ENCODE measurements at regions of chr4 and their contacts with region 1.

Region 1: DNA sequence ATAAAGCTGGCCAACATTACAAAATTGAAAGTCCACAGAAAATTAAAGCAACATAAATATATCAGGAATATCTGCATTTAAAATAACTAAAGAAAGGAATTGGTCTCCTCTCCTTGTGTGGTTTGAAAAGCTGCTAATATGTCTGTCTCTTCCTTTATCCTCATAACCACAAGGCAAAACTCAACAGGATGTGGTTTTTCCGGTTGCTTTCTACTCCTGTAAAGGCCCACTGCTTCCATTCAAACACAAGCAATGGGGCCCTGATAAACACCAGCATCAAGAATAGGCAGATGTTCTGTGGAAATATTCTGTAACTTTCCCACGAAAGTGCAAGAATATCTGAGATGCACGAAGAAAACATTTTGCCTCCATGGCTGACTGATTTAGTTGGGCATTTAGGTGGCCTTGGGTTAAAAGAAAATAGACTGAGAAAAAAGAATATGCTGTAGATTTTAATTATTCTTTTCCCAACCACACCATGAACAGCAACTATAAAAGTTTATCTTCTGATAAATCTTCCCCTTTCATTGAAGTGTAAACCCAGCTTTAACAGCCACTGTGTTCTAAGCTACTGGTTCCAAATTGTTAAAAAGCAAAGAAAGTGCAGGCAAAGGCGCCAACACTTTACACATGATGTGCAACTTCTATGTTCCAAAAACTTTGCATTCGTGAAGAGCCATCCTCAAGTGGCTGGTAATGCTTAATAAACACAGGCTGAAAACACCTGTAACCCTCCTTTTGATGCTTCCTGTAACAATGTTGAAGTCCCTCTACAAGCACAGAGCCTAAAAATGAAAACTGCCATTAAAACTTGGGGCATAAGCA is 50.5 kb upstream of the NDST3 start:
- DNase-seq: no peak
- ATAC-seq: no peak
- H3K4me3 ChIP-seq: no peak overlapping the region
- H3K27ac ChIP-seq: no peak overlapping the region
- H3K4me1 ChIP-seq: no peaks in the 10 kb centered on the region
- H3K27me3 ChIP-seq: no peaks in the 10 kb centered on the region
- CTCF ChIP-seq: no peak
- EP300 ChIP-seq: no peak
- POLR2A ChIP-seq: no peak
- RAD21 ChIP-seq: no peak

Region 2: DNA sequence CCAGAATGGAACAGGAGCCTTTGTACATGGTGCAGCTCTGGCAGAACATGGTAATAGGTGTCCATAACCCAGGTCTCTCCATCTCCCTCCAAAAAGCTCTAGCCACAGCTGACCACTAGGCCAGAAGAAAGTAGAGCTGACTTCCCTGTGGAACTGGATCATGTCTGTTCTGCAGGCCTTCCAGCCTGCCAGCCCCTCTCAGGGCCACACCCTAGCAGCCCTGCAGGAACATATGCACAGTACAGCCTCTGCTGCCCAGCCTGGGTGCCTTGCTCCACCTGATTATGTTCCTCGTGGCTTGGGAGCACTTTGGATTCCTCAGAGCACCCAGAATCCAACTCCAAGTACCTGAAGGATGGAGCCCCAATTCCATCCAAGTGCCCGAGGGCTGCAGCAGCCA is 62.6 kb after region 1 on chr4:
- CTCF ChIA-PET with region 1: no interaction called
- POLR2A ChIA-PET with region 1: no interaction called
- RAD21 ChIA-PET with region 1: no interaction called
- SMC1A ChIA-PET with region 1: no interaction called
- in situ Hi-C with region 1: loop called (anchors 10 kb)
- intact Hi-C with region 1: no loop called
- DNase-seq: no peak
- ATAC-seq: no peak
- H3K4me3 ChIP-seq: no peak overlapping the region
- H3K27ac ChIP-seq: no peak overlapping the region
- H3K4me1 ChIP-seq: no peaks in the 10 kb centered on the region
- H3K27me3 ChIP-seq: no peaks in the 10 kb centered on the region; a peak in 1 of 4 replicates
- CTCF ChIP-seq: no peak
- EP300 ChIP-seq: no peak
- POLR2A ChIP-seq: no peak
- RAD21 ChIP-seq: no peak

Region 3: DNA sequence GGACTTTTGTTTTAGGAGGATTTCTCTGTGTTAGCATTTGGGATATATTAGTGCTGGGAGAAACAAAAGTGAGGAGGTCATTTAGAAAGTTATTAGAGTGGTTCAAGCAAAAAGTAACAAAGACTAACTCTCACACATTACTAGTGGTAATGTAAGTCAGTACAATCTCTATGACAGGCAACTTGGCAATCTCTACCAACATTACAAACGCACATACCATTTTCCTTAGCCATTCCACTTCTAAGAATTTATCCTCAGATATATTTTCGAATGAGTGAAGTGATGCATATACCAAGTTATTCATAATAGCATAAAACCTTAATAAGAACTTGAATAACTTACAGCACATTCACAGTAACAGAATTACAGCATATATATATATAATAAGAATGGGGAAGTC is 222.9 kb after region 1 on chr4:
- CTCF ChIA-PET with region 1: no interaction called
- POLR2A ChIA-PET with region 1: no interaction called
- RAD21 ChIA-PET with region 1: no interaction called
- SMC1A ChIA-PET with region 1: no interaction called
- in situ Hi-C with region 1: no loop called
- intact Hi-C with region 1: no loop called
- DNase-seq: no peak
- ATAC-seq: no peak
- H3K4me3 ChIP-seq: no peak overlapping the region
- H3K27ac ChIP-seq: no peak overlapping the region
- H3K4me1 ChIP-seq: no peaks in the 10 kb centered on the region
- H3K27me3 ChIP-seq: no peaks in the 10 kb centered on the region
- CTCF ChIP-seq: no peak
- EP300 ChIP-seq: no peak
- POLR2A ChIP-seq: no peak
- RAD21 ChIP-seq: no peak